ENCODE measurements at regions of chr10 and their contacts with region 1.

Region 1: GRCh38 chr10:27360581-27361172 is 120.1 kb upstream of the ACBD5 start:
- DNase-seq: peak; percentile 70 to 90 (median 78)
- ATAC-seq: peak; percentile 100
- H3K4me3 ChIP-seq: no peak overlapping the region
- H3K4me3 Mint-ChIP-seq: no peak overlapping the region
- H3K27ac ChIP-seq: no peak overlapping the region
- H3K27ac Mint-ChIP-seq: no peak overlapping the region
- H3K4me1 ChIP-seq: no peaks in the 10 kb centered on the region
- H3K4me1 Mint-ChIP-seq: no peaks in the 10 kb centered on the region
- H3K27me3 ChIP-seq: no peaks in the 10 kb centered on the region
- H3K27me3 Mint-ChIP-seq: no peaks in the 10 kb centered on the region
- CTCF ChIP-seq: peak; percentile 93

Region 2: GRCh38 chr10:26725837-26726727 is 634.6 kb before region 1 on chr10:
- CTCF ChIA-PET with region 1: no interaction called
- POLR2A ChIA-PET with region 1: no interaction called
- intact Hi-C with region 1: loop called (anchors 5 to 10 kb)
- DNase-seq: peak; percentile 16 to 79 (median 38)
- ATAC-seq: peak; percentile 59
- H3K4me3 ChIP-seq: no peak overlapping the region
- H3K4me3 Mint-ChIP-seq: no peak overlapping the region
- H3K27ac ChIP-seq: no peak overlapping the region
- H3K27ac Mint-ChIP-seq: no peak overlapping the region
- H3K4me1 ChIP-seq: peaks cover 7% of the 10 kb centered on the region
- H3K4me1 Mint-ChIP-seq: peaks cover 9% of the 10 kb centered on the region
- H3K27me3 ChIP-seq: no peaks in the 10 kb centered on the region
- H3K27me3 Mint-ChIP-seq: no peaks in the 10 kb centered on the region
- CTCF ChIP-seq: peak; percentile 93

Region 3: GRCh38 chr10:26890956-26891355 is 469.7 kb before region 1 on chr10:
- CTCF ChIA-PET with region 1: no interaction called
- POLR2A ChIA-PET with region 1: no interaction called
- intact Hi-C with region 1: loop called in 1 of 2 experiments (anchors 1 kb)
- DNase-seq: peak in 11 of 14 experiments; percentile 4 to 60 (median 22)
- ATAC-seq: no peak
- H3K4me3 ChIP-seq: no peak overlapping the region
- H3K4me3 Mint-ChIP-seq: no peak overlapping the region
- H3K27ac ChIP-seq: no peak overlapping the region
- H3K27ac Mint-ChIP-seq: no peak overlapping the region
- H3K4me1 ChIP-seq: no peaks in the 10 kb centered on the region
- H3K4me1 Mint-ChIP-seq: no peaks in the 10 kb centered on the region
- H3K27me3 ChIP-seq: no peaks in the 10 kb centered on the region
- H3K27me3 Mint-ChIP-seq: peaks cover 5% of the 10 kb centered on the region
- CTCF ChIP-seq: no peak

Region 4: DNA sequence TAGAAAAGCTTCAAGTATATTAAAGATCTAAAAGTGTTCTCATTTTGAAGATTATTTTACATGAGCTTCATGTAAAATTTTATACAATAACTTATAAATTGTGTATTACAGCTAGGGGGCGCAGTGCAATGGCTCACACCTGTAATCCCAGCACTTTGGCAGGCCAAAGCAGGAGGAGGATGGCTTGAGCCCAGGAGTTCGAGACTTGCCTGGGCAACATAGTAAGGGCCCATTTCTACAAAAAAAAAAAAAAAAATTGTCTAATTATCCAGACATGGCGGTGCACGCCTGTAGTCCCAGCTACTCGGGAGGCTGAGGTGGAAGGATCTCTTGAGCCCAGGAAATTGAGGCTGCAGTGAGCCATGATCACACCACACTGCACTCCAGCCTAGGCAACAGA is 136.7 kb before region 1 on chr10:
- CTCF ChIA-PET with region 1: interaction called, 19 read pairs
- POLR2A ChIA-PET with region 1: no interaction called
- intact Hi-C with region 1: loop called (anchors 1 kb)
- DNase-seq: peak; percentile 11 to 79 (median 32)
- ATAC-seq: peak; percentile 68
- H3K4me3 ChIP-seq: no peak overlapping the region
- H3K4me3 Mint-ChIP-seq: no peak overlapping the region
- H3K27ac ChIP-seq: no peak overlapping the region
- H3K27ac Mint-ChIP-seq: peak overlapping the region; percentile 40
- H3K4me1 ChIP-seq: peaks cover 9% of the 10 kb centered on the region
- H3K4me1 Mint-ChIP-seq: peaks cover 15% of the 10 kb centered on the region
- H3K27me3 ChIP-seq: no peaks in the 10 kb centered on the region
- H3K27me3 Mint-ChIP-seq: no peaks in the 10 kb centered on the region
- CTCF ChIP-seq: peak; percentile 87

Measured in CD4-positive, alpha-beta T cell (primary cell).